ENCODE measurements at regions of chr1 and their contacts with region 1.

Region 1: DNA sequence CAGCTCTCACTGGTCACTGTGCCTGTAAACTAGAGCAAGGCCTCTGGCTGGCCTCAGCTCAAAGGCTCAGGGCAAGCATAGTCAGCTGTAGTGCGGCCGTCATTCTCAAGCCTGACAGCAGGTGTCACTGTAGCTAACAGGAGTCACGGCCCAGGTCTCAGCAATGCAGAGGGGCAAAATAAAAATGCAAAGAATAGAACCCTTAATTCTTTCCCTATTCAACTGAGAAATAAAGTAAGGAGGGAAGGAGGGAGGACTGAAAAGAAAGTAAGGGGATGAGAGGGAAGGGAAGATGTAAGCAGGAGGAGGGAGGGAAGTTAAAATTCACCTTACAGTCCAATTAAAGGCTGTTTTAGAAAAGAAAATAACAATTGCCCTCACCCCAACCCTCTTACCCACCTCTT is 106.1 kb downstream of the KIAA0319L start:
- DNase-seq: peak; percentile 59
- H3K4me3 ChIP-seq: no peak overlapping the region
- H3K27ac ChIP-seq: no peak overlapping the region
- H3K4me1 ChIP-seq: peaks cover 29% of the 10 kb centered on the region
- H3K27me3 ChIP-seq: peaks cover 2% of the 10 kb centered on the region
- CTCF ChIP-seq: peak; percentile 88 to 91

Region 2: DNA sequence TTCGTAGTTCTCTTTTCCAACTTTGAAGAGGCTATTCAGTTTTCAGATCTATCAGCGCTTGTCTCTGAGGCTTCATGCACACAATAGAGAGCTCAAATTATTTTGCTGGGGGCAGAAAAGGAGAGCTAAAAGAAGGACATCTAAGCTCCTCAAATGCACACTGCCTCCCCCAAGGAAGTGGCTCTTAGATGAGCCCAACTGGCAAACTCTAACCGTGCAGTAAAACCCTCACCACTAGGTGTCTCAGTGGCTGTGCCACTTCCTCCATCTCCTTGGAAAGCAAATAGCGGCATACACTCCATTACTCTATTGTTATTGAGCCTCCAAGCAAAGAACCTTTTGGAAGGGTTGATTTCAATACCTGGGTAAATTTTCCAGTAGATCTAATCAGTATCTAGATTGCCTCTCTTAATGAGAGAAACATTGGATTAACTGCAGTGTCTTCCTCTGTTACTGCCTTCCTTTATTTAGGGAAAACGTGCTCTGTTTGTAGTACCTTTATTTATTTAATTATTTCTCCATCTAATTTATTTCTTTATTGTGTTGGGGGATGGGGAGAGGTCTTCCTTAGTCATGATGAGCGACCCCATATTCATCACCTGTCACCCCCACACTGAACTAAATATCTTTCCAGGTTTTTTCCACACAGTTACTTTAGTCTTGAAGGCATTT is 248.9 kb before region 1 on chr1:
- CTCF ChIA-PET with region 1: interaction called, 3 read pairs
- dilution Hi-C with region 1: no loop called
- in situ Hi-C with region 1: no loop called
- intact Hi-C with region 1: loop called (anchors 2 kb)
- DNase-seq: peak; percentile 70
- H3K4me3 ChIP-seq: no peak overlapping the region
- H3K27ac ChIP-seq: no peak overlapping the region
- H3K4me1 ChIP-seq: no peaks in the 10 kb centered on the region
- H3K27me3 ChIP-seq: no peaks in the 10 kb centered on the region
- CTCF ChIP-seq: peak; percentile 86 to 93

Region 3: DNA sequence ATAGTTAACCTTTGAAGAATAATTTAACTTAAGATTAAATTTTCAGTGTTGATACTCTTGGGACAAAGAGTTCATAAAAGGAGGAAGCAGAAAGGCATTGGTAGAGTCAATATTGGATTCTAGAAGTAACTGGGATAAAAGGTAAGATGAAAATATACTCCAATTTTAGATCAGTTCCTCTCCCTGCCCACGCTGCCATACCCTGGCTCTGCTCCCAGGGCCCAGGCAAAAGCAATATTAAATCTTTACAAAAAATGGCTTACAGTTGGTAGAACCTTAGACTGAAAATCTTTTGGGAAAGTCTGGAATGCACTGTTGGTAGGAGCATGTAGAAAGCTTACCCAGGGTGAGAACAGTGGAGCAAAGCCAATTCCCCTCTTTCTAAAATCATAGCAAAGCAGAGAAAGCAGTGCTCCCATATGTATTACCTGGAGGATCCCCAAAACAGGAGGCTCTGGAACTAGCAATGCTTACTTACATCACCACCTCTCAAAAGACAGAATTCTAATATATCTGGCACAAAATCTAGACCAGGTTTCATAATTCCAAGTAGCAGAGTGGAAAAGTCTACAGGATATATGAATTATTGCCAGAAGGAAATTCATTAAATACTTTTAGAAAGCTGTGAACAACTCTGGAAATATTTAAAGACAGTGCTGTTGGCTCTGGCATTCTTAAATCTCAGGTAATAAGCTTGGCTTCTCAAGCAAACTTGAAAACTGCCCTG is 81.5 kb after region 1 on chr1:
- CTCF ChIA-PET with region 1: no interaction called
- dilution Hi-C with region 1: loop called (anchors 5 kb)
- in situ Hi-C with region 1: no loop called
- intact Hi-C with region 1: no loop called
- DNase-seq: no peak
- H3K4me3 ChIP-seq: no peak overlapping the region
- H3K27ac ChIP-seq: no peak overlapping the region
- H3K4me1 ChIP-seq: no peaks in the 10 kb centered on the region
- H3K27me3 ChIP-seq: no peaks in the 10 kb centered on the region
- CTCF ChIP-seq: no peak

Region 4: GRCh38 chr1:35557292-35558063 is 106.4 kb after region 1 on chr1 and contains the starts of genes KIAA0319L and NCDN:
- CTCF ChIA-PET with region 1: interaction called, 5 read pairs
- dilution Hi-C with region 1: no loop called
- in situ Hi-C with region 1: loop called (anchors 5 kb)
- intact Hi-C with region 1: loop called (anchors 1 kb)
- DNase-seq: peak; percentile 97
- H3K4me3 ChIP-seq: peak within 1 kb of the TSS; percentile 85 to 96 (median 90)
- H3K27ac ChIP-seq: peak within 1 kb of the TSS; percentile 69
- H3K4me1 ChIP-seq: peaks cover 55% of the 10 kb centered on the region
- H3K27me3 ChIP-seq: no peaks in the 10 kb centered on the region
- CTCF ChIP-seq: no peak
- total RNA-seq, gene KIAA0319L: 38.1 to 68.2 TPM
- total RNA-seq, gene NCDN: 21.8 to 35.1 TPM

Region 5: DNA sequence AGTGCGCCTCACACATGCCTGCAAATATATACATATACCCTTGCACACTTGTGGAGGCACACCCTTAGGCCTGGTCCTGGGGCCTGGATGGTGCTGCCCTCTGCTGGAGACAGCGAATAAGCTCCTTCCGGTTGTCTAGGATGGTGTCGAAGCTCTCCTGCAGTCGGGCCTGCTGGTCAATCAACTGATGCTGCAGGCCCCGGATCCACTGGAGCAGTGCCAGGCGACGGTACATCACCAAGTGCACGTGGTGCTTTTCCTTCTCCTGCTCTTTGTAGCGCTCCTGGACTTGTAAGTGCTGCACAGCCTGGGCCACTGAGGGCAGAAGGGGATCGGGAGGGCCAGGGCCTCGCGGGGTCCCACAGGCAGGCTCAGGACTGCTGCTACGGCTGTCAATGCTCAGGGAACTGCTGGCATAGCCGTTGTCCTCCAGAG is 264.5 kb after region 1 on chr1:
- CTCF ChIA-PET with region 1: no interaction called
- dilution Hi-C with region 1: no loop called
- in situ Hi-C with region 1: loop called (anchors 10 kb)
- intact Hi-C with region 1: loop called (anchors 1 kb)
- DNase-seq: peak; percentile 57
- H3K4me3 ChIP-seq: no peak overlapping the region
- H3K27ac ChIP-seq: no peak overlapping the region
- H3K4me1 ChIP-seq: peaks cover 18% of the 10 kb centered on the region
- H3K27me3 ChIP-seq: no peaks in the 10 kb centered on the region
- CTCF ChIP-seq: peak; percentile 87 to 92

Region 6: GRCh38 chr1:35726450-35727433 is 275.6 kb after region 1 on chr1:
- CTCF ChIA-PET with region 1: interaction called, 3 read pairs
- dilution Hi-C with region 1: loop called (anchors 5 kb)
- in situ Hi-C with region 1: loop called (anchors 10 kb)
- intact Hi-C with region 1: no loop called
- DNase-seq: peak; percentile 22
- H3K4me3 ChIP-seq: no peak overlapping the region
- H3K27ac ChIP-seq: no peak overlapping the region
- H3K4me1 ChIP-seq: no peaks in the 10 kb centered on the region
- H3K27me3 ChIP-seq: no peaks in the 10 kb centered on the region
- CTCF ChIP-seq: peak; percentile 87 to 89